Psoas muscle (tissue), 8 donors: ENCODE measurements at regions of chr5 and their contacts with region 1.

Region 1: DNA sequence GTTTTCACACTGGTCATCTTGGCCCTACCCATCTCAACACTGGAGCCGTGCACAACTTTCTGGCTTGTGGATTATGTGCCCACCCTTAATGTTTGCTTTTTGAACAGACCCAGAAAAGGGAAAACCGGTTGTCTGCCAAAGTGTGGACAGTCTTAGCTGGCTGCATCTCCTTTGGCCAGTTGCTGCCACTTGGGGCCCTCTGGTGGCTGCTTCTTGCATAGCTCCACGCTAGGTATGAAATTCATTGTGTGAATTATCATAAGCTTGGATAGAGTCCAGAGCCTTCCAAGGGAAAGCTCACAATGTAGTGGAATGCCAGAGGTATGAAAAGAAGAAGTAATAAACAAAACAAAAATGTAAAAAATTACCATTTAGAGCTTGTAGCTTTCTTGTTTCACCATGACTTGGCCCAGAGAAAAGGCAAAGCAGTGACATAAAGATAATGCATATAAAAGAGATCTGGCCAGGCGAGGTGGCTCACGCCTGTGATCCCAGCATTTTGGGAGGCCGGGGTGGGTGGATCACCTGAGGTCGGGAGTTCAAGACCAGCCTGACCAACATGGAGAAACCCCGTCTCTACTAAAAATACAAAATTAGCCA is 12.5 kb upstream of the SLC36A3 start:
- DNase-seq: peak; percentile 75 to 81
- ATAC-seq: peak; percentile 71 to 85 (median 77)
- H3K4me3 ChIP-seq: no peak overlapping the region
- H3K27ac ChIP-seq: no peak overlapping the region
- H3K4me1 ChIP-seq: no peaks in the 10 kb centered on the region
- H3K27me3 ChIP-seq: peaks cover 0 to 3% (median 0%) of the 10 kb centered on the region in 3 donors
- CTCF ChIP-seq: peak; percentile 81

Region 2: GRCh38 chr5:151126199-151126645 is 189.9 kb before region 1 on chr5:
- intact Hi-C with region 1: loop called in 1 of 2 experiments (anchors 10 kb)
- DNase-seq: peak; percentile 83 to 91
- ATAC-seq: peak; percentile 67 to 72 (median 71)
- H3K4me3 ChIP-seq: no peak overlapping the region
- H3K27ac ChIP-seq: peak overlapping the region; percentile 86
- H3K4me1 ChIP-seq: peaks cover 36% of the 10 kb centered on the region
- H3K27me3 ChIP-seq: no peaks in the 10 kb centered on the region
- CTCF ChIP-seq: peak; percentile 90

Region 3: DNA sequence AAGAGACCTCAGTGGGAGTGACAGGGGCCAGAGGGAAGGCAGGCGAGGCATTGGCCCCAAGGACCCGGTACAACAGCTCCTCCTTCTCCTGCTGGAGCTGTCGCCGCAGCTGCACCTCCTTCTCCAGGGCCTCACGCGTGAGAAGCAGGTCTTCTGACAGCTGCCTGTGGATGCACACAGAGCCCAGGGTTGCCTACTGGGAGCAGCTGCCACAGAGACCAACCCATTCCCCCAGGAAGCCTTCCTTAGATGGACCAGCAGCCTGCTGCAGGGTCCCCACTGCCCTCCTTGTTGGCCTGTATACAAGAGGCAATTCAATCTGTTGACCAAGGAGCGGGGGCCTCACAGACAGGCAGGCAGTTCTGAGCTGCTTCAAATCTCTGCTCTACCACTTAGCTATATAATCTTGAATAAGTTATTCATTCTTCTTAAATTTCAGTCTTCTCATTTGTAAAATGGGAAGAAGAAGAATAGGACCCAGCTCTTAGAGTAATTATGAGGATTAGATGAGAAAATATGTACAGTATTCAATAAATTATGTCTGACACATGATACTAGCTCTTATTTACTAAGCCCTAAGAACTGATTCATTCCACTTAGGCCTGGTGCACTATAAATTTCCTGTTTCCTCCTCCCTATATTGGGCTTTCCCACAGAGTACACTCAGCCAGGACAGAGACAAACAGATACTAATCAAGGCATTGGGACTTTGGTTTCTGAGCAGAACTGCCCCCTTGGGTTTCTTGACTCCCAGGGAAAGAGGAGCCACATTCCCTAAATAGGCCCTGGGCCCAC is 132.4 kb before region 1 on chr5:
- intact Hi-C with region 1: loop called in 1 of 2 experiments (anchors 10 kb)
- DNase-seq: no peak
- ATAC-seq: no peak
- H3K4me3 ChIP-seq: no peak overlapping the region
- H3K27ac ChIP-seq: no peak overlapping the region
- H3K4me1 ChIP-seq: peaks cover 3% of the 10 kb centered on the region
- H3K27me3 ChIP-seq: no peaks in the 10 kb centered on the region
- CTCF ChIP-seq: no peak

Region 4: GRCh38 chr5:151384106-151384505 is 68.0 kb after region 1 on chr5:
- intact Hi-C with region 1: no loop called
- DNase-seq: no peak
- ATAC-seq: peak; percentile 18 to 53 (median 43)
- H3K4me3 ChIP-seq: peak overlapping the region; percentile 37
- H3K27ac ChIP-seq: peak overlapping the region; percentile 91
- H3K4me1 ChIP-seq: peaks cover 18% of the 10 kb centered on the region
- H3K27me3 ChIP-seq: no peaks in the 10 kb centered on the region
- CTCF ChIP-seq: no peak

Region 5: DNA sequence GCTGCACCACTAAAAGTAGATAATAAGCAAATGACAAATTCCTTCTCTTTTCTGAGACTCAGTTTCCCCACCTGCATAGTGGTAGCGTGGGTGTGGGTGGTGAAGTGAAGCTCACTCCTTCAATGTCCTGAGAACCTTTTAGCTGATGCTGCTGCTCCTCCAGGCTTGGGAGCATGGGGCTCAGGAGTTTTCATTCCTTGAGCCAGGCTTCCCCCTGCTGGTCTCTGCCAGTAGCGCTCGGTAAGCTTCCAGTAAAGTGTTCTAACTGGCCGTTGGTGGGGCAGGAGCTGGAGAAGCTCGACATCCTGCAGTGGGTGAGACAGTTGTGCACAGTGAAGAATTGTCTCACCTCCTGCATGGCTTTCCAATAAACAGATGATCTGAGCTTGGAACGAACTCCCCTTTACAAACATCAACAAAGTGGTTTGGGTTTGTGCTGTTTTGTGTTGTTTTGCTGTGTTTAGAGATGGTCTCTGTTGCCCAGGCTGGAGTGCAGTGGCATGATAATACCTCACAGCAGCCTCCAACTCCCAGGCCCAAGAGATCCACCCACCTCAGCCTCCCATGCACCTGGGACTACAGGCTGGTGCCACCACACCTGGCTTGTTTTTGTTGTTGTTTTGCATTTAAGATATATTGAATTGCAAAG is 336.0 kb after region 1 on chr5:
- intact Hi-C with region 1: loop called in 1 of 2 experiments (anchors 5 kb)
- DNase-seq: peak; percentile 79 to 85
- ATAC-seq: peak; percentile 93 to 98 (median 96)
- H3K4me3 ChIP-seq: no peak overlapping the region
- H3K27ac ChIP-seq: no peak overlapping the region
- H3K4me1 ChIP-seq: no peaks in the 10 kb centered on the region
- H3K27me3 ChIP-seq: no peaks in the 10 kb centered on the region
- CTCF ChIP-seq: peak; percentile 86

Region 6: DNA sequence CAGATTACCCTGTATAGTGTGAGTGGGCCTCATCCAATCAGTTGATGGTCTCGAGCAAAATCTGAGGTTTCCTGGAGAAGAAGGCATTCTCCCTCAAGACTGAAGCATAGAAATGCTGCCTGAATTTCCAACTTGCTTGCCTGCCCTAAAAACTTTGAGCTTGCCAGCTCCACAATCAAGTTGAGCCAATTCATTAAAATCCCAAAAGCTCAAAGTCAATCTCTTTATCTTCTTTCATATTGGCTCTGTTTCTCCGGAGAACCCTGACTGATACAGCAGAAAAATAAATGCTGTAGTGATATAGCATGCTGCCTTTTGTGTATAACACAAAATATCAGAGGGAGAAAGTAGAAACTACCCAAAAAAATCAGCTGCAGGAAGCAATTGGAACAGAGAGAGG is 1161.4 kb after region 1 on chr5:
- intact Hi-C with region 1: no loop called
- DNase-seq: no peak
- ATAC-seq: no peak
- H3K4me3 ChIP-seq: no peak overlapping the region
- H3K27ac ChIP-seq: no peak overlapping the region
- H3K4me1 ChIP-seq: no peaks in the 10 kb centered on the region
- H3K27me3 ChIP-seq: no peaks in the 10 kb centered on the region
- CTCF ChIP-seq: no peak